ENCODE measurements at regions of chr21 and their contacts with region 1.

Region 1: GRCh38 chr21:37700641-37701202 is 215.5 kb downstream of the KCNJ6 start:
- DNase-seq: peak; percentile 90
- H3K4me3 ChIP-seq: no peak overlapping the region
- H3K27ac ChIP-seq: no peak overlapping the region
- H3K4me1 ChIP-seq: peaks cover 7% of the 10 kb centered on the region
- CTCF ChIP-seq: peak; percentile 81

Region 2: DNA sequence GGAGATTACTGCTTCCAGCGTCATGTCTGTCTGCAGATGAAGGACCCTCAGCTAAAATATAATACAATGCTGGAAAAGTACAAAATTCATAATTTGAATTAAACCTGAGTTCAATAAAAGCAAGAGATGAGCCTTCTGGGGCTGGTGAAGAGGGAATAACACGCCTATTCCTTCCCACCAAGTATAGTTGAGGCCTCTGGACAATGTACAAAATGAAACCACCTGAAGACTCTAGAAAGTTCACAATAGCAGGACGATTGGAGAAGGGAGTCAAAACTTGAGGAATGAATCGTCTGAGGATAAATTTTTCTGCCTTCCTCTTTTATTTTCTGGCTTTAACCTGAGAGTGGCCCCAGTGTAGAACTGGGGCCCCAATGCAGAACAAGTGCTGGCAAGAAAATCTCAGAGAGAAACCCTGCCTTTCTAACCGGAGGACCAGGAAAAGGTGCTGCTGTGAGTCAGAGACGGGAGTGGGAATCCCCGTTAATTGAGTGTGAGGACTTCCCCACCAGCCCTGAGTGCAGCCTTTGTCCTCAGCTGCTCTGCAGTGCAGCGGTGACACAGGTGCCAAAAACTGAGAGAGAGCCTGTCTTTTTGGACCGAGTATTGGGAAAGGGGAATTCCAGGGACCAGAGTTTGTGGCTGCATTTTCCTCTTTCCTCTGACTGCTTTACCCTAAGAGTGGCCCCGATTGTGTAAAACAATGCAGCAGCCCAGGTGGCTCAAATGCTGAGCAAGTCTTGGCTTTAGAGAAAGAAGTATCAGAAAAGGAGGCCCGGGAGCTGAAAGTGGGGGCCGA is 69.2 kb before region 1 on chr21:
- CTCF ChIA-PET with region 1: no interaction called
- POLR2A ChIA-PET with region 1: no interaction called
- intact Hi-C with region 1: no loop called
- DNase-seq: no peak
- H3K4me3 ChIP-seq: no peak overlapping the region
- H3K27ac ChIP-seq: no peak overlapping the region
- H3K4me1 ChIP-seq: no peaks in the 10 kb centered on the region
- CTCF ChIP-seq: no peak

Region 3: DNA sequence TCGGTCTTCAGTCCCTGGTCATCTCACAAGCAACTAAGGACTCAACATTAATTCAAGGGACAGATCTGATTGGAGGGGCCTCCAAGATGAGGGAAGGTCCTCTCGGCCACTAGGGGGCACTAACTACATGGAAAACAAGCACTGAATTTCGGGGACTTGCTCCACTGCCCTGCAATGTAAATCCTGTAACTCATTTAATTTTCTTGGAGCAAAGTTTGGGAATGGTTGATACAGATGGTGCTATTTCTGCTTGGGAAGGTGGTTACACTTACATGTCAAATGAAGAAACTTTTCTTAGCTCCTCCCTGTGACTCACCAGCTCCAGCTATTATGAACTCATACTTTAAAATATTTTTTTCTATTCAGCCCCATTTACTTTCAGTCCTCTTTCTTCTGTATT is 458.6 kb after region 1 on chr21:
- CTCF ChIA-PET with region 1: no interaction called
- POLR2A ChIA-PET with region 1: no interaction called
- intact Hi-C with region 1: loop called (anchors 1 kb)
- DNase-seq: peak; percentile 63
- H3K4me3 ChIP-seq: no peak overlapping the region
- H3K27ac ChIP-seq: no peak overlapping the region
- H3K4me1 ChIP-seq: no peaks in the 10 kb centered on the region
- CTCF ChIP-seq: peak; percentile 93

Region 4: DNA sequence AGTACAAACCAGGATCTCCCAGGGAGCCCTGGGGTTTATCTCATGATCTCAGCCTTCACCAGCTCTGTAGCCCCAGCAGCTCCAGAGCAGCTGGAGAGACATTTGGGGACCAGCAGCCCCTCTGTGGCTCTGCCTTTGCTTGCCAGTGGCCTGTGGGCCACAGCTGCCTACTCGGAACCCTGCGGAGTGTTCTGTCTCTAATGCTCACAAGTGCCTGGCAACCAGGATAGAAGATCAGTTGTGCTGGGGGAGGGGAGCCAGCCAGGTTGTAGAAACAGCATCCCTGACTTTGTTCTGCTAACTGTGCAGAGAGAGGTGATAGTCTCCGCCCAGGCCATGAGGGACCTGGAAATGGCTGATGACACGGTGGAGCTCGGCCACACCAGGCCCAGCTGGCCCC is 505.2 kb after region 1 on chr21:
- CTCF ChIA-PET with region 1: no interaction called
- POLR2A ChIA-PET with region 1: no interaction called
- intact Hi-C with region 1: no loop called
- DNase-seq: no peak
- H3K4me3 ChIP-seq: no peak overlapping the region
- H3K27ac ChIP-seq: no peak overlapping the region
- H3K4me1 ChIP-seq: no peaks in the 10 kb centered on the region
- CTCF ChIP-seq: no peak

Measured in OCI-LY7 (cell line).